ENCODE measurements at regions of chr3 and their contacts with region 1.

Region 1: GRCh38 chr3:8111069-8111798 is 390.4 kb upstream of the LMCD1 start:
- DNase-seq: peak; percentile 64 to 76
- H3K4me3 ChIP-seq: no peak overlapping the region
- H3K4me3 Mint-ChIP-seq: no peak overlapping the region
- H3K27ac Mint-ChIP-seq: no peak overlapping the region
- H3K4me1 ChIP-seq: no peaks in the 10 kb centered on the region
- H3K4me1 Mint-ChIP-seq: no peaks in the 10 kb centered on the region
- H3K27me3 ChIP-seq: no peaks in the 10 kb centered on the region
- H3K27me3 Mint-ChIP-seq: peaks cover 8% of the 10 kb centered on the region
- CTCF ChIP-seq: peak; percentile 68 to 76

Region 2: GRCh38 chr3:6935970-6936369 is 1175.3 kb before region 1 on chr3:
- CTCF ChIA-PET with region 1: no interaction called
- POLR2A ChIA-PET with region 1: no interaction called
- intact Hi-C with region 1: loop called (anchors 5 kb)
- DNase-seq: no peak
- H3K4me3 ChIP-seq: no peak overlapping the region
- H3K4me3 Mint-ChIP-seq: no peak overlapping the region
- H3K27ac Mint-ChIP-seq: no peak overlapping the region
- H3K4me1 ChIP-seq: no peaks in the 10 kb centered on the region
- H3K4me1 Mint-ChIP-seq: no peaks in the 10 kb centered on the region
- H3K27me3 ChIP-seq: no peaks in the 10 kb centered on the region
- H3K27me3 Mint-ChIP-seq: no peaks in the 10 kb centered on the region
- CTCF ChIP-seq: no peak

Region 3: DNA sequence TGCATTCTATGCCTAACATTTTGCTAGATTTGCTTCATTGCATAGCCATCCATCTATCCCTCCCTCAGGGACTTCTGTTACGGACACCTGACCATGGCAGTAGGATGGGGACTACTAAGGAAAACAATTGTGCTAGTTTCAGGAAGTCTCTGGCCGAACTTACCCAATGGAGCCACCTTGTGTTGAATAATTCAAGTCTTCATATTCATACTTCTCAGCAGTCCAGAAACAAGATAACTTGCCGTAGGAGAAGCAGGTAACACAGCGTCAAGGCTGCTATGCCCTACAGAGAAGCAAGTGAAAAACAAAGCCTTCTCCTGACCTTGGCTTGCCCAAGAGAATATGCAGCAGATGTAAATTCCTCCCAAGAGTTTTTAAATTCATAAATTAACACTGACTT is 565.0 kb before region 1 on chr3:
- CTCF ChIA-PET with region 1: no interaction called
- POLR2A ChIA-PET with region 1: no interaction called
- intact Hi-C with region 1: loop called (anchors 1 kb)
- DNase-seq: peak in 1 of 2 experiments; percentile 2
- H3K4me3 ChIP-seq: no peak overlapping the region
- H3K4me3 Mint-ChIP-seq: no peak overlapping the region
- H3K27ac Mint-ChIP-seq: no peak overlapping the region
- H3K4me1 ChIP-seq: no peaks in the 10 kb centered on the region
- H3K4me1 Mint-ChIP-seq: no peaks in the 10 kb centered on the region
- H3K27me3 ChIP-seq: no peaks in the 10 kb centered on the region
- H3K27me3 Mint-ChIP-seq: peaks cover 5% of the 10 kb centered on the region
- CTCF ChIP-seq: no peak

Region 4: GRCh38 chr3:8095724-8096123 is 15.5 kb before region 1 on chr3:
- CTCF ChIA-PET with region 1: interaction called, 13 read pairs
- POLR2A ChIA-PET with region 1: no interaction called
- intact Hi-C with region 1: no loop called
- DNase-seq: peak; percentile 35 to 46
- H3K4me3 ChIP-seq: no peak overlapping the region
- H3K4me3 Mint-ChIP-seq: no peak overlapping the region
- H3K27ac Mint-ChIP-seq: no peak overlapping the region
- H3K4me1 ChIP-seq: no peaks in the 10 kb centered on the region
- H3K4me1 Mint-ChIP-seq: no peaks in the 10 kb centered on the region
- H3K27me3 ChIP-seq: no peaks in the 10 kb centered on the region
- H3K27me3 Mint-ChIP-seq: peaks cover 7% of the 10 kb centered on the region
- CTCF ChIP-seq: peak; percentile 16 to 21

Region 5: DNA sequence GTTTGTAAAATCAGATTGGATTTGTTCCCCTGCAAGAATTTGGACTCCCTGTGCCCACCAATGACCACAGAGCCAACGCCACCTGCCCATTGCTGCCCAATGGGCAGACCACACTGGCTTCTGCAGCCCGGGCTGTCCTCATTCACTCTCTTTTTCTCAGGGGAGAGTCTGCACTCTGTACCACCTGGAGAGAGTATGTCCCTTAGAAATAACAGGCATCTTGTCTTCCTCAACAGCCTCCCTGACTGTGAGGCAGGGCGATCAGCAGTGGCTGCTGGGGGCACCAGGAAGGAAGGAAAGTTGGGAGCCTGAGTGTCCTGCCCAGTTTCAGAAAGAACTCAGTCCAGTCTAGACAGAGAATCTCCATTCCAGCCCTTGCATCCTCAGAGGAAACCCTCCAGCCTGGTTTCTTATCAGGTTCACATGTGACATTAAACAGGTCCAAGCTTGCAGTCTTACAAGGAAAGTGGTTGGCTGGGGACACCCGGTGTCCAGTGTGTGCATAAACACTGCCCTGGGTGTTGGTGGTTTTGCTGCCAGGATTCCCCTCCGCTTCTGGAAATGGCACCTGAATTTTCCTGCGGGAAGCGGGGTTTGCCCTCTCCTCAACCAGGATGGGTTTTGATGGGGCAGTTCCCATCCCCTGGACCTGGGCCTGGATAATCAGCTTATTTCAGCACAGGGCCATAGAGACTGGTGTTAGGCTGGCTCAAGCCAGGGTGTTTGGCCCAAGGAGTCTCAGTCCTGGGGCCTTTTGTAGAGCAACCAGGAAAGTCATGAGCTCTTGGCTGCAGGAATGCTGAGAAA is 496.2 kb after region 1 on chr3:
- CTCF ChIA-PET with region 1: no interaction called
- POLR2A ChIA-PET with region 1: no interaction called
- intact Hi-C with region 1: loop called (anchors 10 kb)
- DNase-seq: peak; percentile 69 to 73
- H3K4me3 ChIP-seq: no peak overlapping the region
- H3K4me3 Mint-ChIP-seq: no peak overlapping the region
- H3K27ac Mint-ChIP-seq: no peak overlapping the region
- H3K4me1 ChIP-seq: peaks cover 12% of the 10 kb centered on the region; the same call in 1 of the 2 replicates
- H3K4me1 Mint-ChIP-seq: no peaks in the 10 kb centered on the region
- H3K27me3 ChIP-seq: no peaks in the 10 kb centered on the region
- H3K27me3 Mint-ChIP-seq: no peaks in the 10 kb centered on the region
- CTCF ChIP-seq: peak; percentile 52 to 69

Measured in Caco-2 (cell line).